GM23248 (cell line): ENCODE measurements at regions of chrX and their contacts with region 1.

Region 1: GRCh38 chrX:119729408-119730201 is 28.8 kb upstream of the SOWAHD start:
- DNase-seq: peak; percentile 79
- H3K4me3 ChIP-seq: no peak overlapping the region
- H3K27ac ChIP-seq: no peak overlapping the region
- H3K4me1 ChIP-seq: no peaks in the 10 kb centered on the region
- H3K27me3 ChIP-seq: no peaks in the 10 kb centered on the region

Region 2: GRCh38 chrX:119516157-119516702 is 213.4 kb before region 1 on chrX:
- in situ Hi-C with region 1: loop called (anchors 25 kb)
- DNase-seq: peak; percentile 77
- H3K4me3 ChIP-seq: no peak overlapping the region
- H3K27ac ChIP-seq: no peak overlapping the region
- H3K4me1 ChIP-seq: no peaks in the 10 kb centered on the region
- H3K27me3 ChIP-seq: no peaks in the 10 kb centered on the region

Region 3: GRCh38 chrX:119606280-119607015 is 123.2 kb before region 1 on chrX and contains the start of gene NKRF:
- in situ Hi-C with region 1: loop called (anchors 10 kb)
- DNase-seq: peak; percentile 92
- H3K4me3 ChIP-seq: peak within 1 kb of the TSS; percentile 74
- H3K27ac ChIP-seq: peak within 1 kb of the TSS; percentile 96
- H3K4me1 ChIP-seq: 0 out of 2 replicates have a peak, but pooled peaks cover 6% of the 10 kb centered on the region
- H3K27me3 ChIP-seq: no peaks in the 10 kb centered on the region
- total RNA-seq, gene NKRF: 3.8 TPM in 2 replicates

Region 4: DNA sequence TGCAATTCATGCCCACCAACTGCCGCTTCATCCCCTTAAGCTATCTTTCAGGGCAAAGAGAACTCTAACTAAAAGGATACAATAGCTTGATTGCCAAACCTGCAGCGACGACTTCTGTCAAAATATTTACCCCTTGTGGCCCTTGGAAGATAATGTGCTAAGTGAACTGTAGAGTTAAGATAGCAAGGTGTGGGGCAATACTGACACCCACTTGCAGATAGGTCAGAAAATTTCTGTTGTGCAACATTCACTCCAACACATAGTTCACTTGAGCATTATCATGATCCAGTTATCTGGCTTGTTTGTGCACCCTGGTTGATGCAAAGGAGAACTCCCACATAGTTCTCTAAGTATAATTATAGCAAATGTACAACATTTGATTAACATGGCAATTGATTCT is 292.3 kb after region 1 on chrX:
- in situ Hi-C with region 1: no loop called
- DNase-seq: no peak
- H3K4me3 ChIP-seq: no peak overlapping the region
- H3K27ac ChIP-seq: no peak overlapping the region
- H3K4me1 ChIP-seq: no peaks in the 10 kb centered on the region
- H3K27me3 ChIP-seq: peaks cover 9% of the 10 kb centered on the region; the same call in 1 of the 2 replicates